K562 (cell line): ENCODE measurements at regions of chr1 and their contacts with region 1.

Region 1: DNA sequence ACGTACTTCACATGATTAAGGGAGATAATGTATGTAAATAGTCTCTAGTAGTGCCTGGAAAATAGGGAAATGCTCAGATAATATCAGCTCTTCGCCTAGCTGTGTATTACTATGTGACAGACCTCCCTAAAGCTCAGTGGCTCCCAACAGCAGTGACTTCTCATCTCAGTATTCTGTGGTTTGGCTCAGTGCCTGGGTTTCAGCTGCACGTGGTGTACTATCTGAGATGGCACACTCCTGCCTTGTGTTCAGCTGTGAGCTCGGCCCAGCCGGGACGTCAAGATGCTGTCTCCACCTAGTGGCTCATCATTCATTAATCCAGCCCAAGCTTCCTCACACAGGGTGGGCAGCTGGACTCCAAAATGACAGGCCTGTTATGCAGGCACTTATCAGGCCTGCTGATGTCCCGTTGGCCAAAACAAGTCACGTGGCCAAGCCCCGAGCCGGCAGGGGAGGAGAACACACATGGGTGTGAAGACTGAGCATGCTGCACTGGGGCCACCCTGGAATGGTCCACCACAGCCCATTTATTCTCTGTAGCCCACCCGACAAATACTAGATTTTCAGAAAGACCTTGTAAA is 17.8 kb downstream of the SLFNL1 start:
- DNase-seq: peak; percentile 89 to 99 (median 93)
- ATAC-seq: peak; percentile 98
- H3K4me3 ChIP-seq: no peak overlapping the region
- H3K27ac ChIP-seq: no peak overlapping the region
- H3K4me1 ChIP-seq: peaks cover 13 to 17% of the 10 kb centered on the region in 2 experiments; a peak in 4 of 5 replicates
- H3K27me3 ChIP-seq: no peaks in the 10 kb centered on the region; a peak in 1 of 5 replicates
- CTCF ChIP-seq: peak; percentile 79 to 92 (median 88)
- EP300 ChIP-seq: peak; percentile 85
- POLR2A ChIP-seq: no peak
- RAD21 ChIP-seq: peak; percentile 70 to 80

Region 2: GRCh38 chr1:40862008-40862863 is 141.5 kb before region 1 on chr1 and contains the start of gene CITED4:
- CTCF ChIA-PET with region 1: no interaction called
- POLR2A ChIA-PET with region 1: no interaction called
- in situ Hi-C with region 1: no loop called
- intact Hi-C with region 1: loop called (anchors 5 kb)
- DNase-seq: peak; percentile 97 to 99 (median 99)
- ATAC-seq: peak; percentile 95
- H3K4me3 ChIP-seq: peak within 1 kb of the TSS; percentile 45
- H3K27ac ChIP-seq: peak within 1 kb of the TSS; percentile 52
- H3K4me1 ChIP-seq: peaks cover 32 to 58% of the 10 kb centered on the region in 2 experiments
- H3K27me3 ChIP-seq: peaks cover 0 to 2% of the 10 kb centered on the region in 2 experiments; a peak in 1 of 5 replicates
- CTCF ChIP-seq: peak; percentile 79 to 95 (median 85)
- EP300 ChIP-seq: peak; percentile 35; the same call in 1 of the 2 replicates
- POLR2A ChIP-seq: peak; percentile 60
- RAD21 ChIP-seq: peak; percentile 87 to 96
- polyA plus RNA-seq, gene CITED4: not detected

Region 3: DNA sequence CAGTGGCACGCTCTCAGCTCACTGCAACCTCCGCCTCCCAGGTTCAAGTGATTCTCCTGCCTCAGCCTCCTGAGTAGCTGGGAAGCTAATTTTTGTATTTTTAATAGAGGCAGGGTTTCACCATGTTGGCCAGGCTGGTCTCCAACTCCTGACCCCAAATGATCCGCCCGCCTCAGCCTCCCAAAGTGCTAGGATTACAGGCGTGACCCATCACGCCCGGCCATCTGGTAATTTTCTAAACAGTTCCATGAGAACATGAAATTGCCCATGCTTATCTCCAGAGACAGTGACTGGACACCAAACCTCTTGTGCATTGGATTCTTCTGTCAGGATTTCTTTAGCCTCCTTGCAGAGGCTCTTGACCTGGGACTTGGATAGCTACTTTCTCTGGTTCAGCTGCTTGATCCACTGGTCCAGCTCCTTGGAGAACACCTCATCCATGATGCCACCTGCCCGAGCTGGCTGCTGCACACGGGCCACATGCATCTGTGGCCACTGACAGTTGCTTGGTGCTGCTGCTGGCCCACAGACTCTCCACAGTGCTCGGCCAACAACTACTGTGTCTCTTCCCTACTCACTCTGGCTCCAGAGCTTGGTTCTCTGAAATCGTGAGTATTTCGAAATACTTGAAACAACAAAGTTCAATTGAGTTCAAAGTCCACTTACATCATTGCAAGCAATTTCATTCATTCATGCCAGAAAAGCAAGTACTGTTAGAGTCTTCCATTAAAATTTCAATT is 64.2 kb before region 1 on chr1:
- CTCF ChIA-PET with region 1: no interaction called
- POLR2A ChIA-PET with region 1: no interaction called
- in situ Hi-C with region 1: no loop called
- intact Hi-C with region 1: no loop called
- DNase-seq: peak; percentile 37 to 83 (median 58)
- ATAC-seq: peak; percentile 91
- H3K4me3 ChIP-seq: no peak overlapping the region
- H3K27ac ChIP-seq: no peak overlapping the region
- H3K4me1 ChIP-seq: peaks cover 9 to 18% of the 10 kb centered on the region in 2 experiments; a peak in 4 of 5 replicates
- H3K27me3 ChIP-seq: no peaks in the 10 kb centered on the region
- CTCF ChIP-seq: no peak
- EP300 ChIP-seq: peak; percentile 89
- POLR2A ChIP-seq: no peak
- RAD21 ChIP-seq: no peak

Region 4: DNA sequence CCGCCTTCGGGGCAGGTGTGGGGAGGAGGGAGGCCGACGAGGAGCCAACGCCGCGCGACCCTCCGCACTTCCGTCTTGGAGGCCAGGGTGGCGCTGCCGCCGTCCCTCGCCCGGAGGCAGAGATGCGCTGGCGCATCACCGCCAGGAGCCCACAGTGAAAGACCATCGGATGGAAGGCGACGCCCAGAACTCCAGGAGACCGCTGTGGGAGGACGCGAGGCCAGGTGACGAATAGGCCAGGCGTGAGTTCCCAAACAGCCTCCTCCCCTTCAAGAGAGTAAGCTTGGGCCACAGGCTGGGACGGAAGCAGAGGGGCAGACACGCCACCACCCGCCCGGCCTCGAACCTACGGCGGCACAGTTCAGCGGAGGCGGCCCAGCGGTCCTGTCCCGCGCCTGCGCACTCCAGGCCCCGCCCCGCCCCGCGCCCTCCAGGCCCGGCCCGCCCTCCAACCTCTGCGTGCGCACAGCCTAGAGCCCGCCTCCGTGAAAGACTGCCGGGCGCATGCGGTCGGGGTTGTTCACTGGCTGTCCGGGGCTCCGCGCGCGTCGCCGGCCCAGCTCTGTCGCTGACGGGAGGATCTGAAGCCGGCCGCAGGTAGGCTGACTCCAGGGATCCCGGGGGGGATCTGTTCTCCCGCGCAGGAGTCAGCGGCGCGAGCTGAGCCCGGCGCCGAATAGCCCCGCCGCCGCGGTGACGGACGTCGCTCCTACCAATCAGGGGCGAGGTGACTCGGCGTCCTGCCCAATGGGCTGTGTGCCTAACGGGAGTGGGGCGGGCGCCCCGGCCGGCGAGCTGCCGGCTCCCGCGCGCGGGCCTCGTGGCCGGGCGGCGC is 24.3 kb before region 1 on chr1 and contains the start of gene CTPS1:
- CTCF ChIA-PET with region 1: no interaction called
- POLR2A ChIA-PET with region 1: interaction called, 19 read pairs
- in situ Hi-C with region 1: no loop called
- intact Hi-C with region 1: loop called (anchors 1 kb)
- DNase-seq: peak; percentile 97 to 100 (median 99)
- ATAC-seq: peak; percentile 94
- H3K4me3 ChIP-seq: peak within 1 kb of the TSS; percentile 72
- H3K27ac ChIP-seq: peak within 1 kb of the TSS; percentile 97
- H3K4me1 ChIP-seq: peaks cover 34 to 37% of the 10 kb centered on the region in 2 experiments
- H3K27me3 ChIP-seq: no peaks in the 10 kb centered on the region
- CTCF ChIP-seq: peak; percentile 38 to 62 (median 43)
- EP300 ChIP-seq: no peak
- POLR2A ChIP-seq: peak; percentile 97
- RAD21 ChIP-seq: no peak
- polyA plus RNA-seq, gene CTPS1: 71.5 to 72.2 TPM

Region 5: GRCh38 chr1:40986956-40987355 is 16.8 kb before region 1 on chr1:
- CTCF ChIA-PET with region 1: no interaction called
- POLR2A ChIA-PET with region 1: interaction called, 19 read pairs
- in situ Hi-C with region 1: no loop called
- intact Hi-C with region 1: no loop called
- DNase-seq: no peak
- ATAC-seq: no peak; the same call in 1 of the 3 replicates
- H3K4me3 ChIP-seq: no peak overlapping the region
- H3K27ac ChIP-seq: no peak overlapping the region
- H3K4me1 ChIP-seq: peaks cover 3 to 8% of the 10 kb centered on the region in 2 experiments; a peak in 4 of 5 replicates
- H3K27me3 ChIP-seq: no peaks in the 10 kb centered on the region
- CTCF ChIP-seq: no peak
- EP300 ChIP-seq: no peak
- POLR2A ChIP-seq: no peak
- RAD21 ChIP-seq: no peak

Region 6: DNA sequence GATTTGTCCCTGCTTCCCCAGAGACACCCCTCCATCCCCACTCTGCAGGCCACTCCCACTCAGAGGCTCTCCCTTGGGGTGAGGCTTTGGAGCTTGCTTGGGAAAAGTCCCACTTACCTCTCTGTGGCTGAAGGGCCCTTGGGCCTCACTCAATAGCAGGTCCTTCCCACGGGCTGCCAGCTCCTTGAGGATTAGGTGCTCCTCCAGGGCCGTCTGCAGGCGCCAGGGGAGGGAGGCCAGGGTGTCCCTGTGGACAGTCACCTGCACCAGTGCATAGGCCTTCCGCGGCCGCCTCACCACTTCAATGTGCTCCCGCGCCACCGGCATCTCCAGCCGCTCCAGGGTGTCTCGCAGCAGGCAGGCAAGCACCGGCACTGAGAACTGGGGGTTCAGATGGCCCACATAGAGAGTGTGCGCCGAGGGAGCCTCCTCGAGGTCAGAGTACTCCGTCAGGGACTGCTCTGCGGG is 16.4 kb after region 1 on chr1:
- CTCF ChIA-PET with region 1: no interaction called
- POLR2A ChIA-PET with region 1: interaction called, 10 read pairs
- in situ Hi-C with region 1: no loop called
- intact Hi-C with region 1: no loop called
- DNase-seq: no peak
- ATAC-seq: peak; percentile 2; the same call in 1 of the 3 replicates
- H3K4me3 ChIP-seq: no peak overlapping the region
- H3K27ac ChIP-seq: no peak overlapping the region
- H3K4me1 ChIP-seq: peaks cover 0 to 25% of the 10 kb centered on the region in 2 experiments; a peak in 2 of 5 replicates
- H3K27me3 ChIP-seq: no peaks in the 10 kb centered on the region
- CTCF ChIP-seq: no peak
- EP300 ChIP-seq: no peak
- POLR2A ChIP-seq: peak; percentile 33; the same call in 1 of the 2 replicates
- RAD21 ChIP-seq: no peak